Thyroid gland (tissue), 4 donors: ENCODE measurements at regions of chr1 and their contacts with region 1.

Region 1: GRCh38 chr1:168719306-168720111 is 9.5 kb downstream of the DPT start:
- DNase-seq: no peak
- H3K4me3 ChIP-seq: no peak overlapping the region
- H3K27ac ChIP-seq: no peak overlapping the region
- H3K4me1 ChIP-seq: peaks cover 5 to 6% of the 10 kb centered on the region in 2 donors
- H3K27me3 ChIP-seq: no peaks in the 10 kb centered on the region
- CTCF ChIP-seq: no peak
- POLR2A ChIP-seq: no peak

Region 2: GRCh38 chr1:168591066-168591465 is 128.4 kb before region 1 on chr1:
- intact Hi-C with region 1: no loop called
- DNase-seq: no peak
- H3K4me3 ChIP-seq: no peak overlapping the region
- H3K27ac ChIP-seq: no peak overlapping the region
- H3K4me1 ChIP-seq: no peaks in the 10 kb centered on the region
- H3K27me3 ChIP-seq: no peaks in the 10 kb centered on the region
- CTCF ChIP-seq: no peak
- POLR2A ChIP-seq: no peak

Region 3: GRCh38 chr1:169072945-169073730 is 353.6 kb after region 1 on chr1:
- intact Hi-C with region 1: loop called (anchors 10 kb)
- DNase-seq: peak in 1 of 2 donors; percentile 16
- H3K4me3 ChIP-seq: no peak overlapping the region
- H3K27ac ChIP-seq: no peak overlapping the region
- H3K4me1 ChIP-seq: peaks cover 0 to 8% of the 10 kb centered on the region in 2 donors
- H3K27me3 ChIP-seq: no peaks in the 10 kb centered on the region
- CTCF ChIP-seq: no peak
- POLR2A ChIP-seq: no peak